Natural killer cell (primary cell): ENCODE measurements at regions of chr1 and their contacts with region 1.

Region 1: DNA sequence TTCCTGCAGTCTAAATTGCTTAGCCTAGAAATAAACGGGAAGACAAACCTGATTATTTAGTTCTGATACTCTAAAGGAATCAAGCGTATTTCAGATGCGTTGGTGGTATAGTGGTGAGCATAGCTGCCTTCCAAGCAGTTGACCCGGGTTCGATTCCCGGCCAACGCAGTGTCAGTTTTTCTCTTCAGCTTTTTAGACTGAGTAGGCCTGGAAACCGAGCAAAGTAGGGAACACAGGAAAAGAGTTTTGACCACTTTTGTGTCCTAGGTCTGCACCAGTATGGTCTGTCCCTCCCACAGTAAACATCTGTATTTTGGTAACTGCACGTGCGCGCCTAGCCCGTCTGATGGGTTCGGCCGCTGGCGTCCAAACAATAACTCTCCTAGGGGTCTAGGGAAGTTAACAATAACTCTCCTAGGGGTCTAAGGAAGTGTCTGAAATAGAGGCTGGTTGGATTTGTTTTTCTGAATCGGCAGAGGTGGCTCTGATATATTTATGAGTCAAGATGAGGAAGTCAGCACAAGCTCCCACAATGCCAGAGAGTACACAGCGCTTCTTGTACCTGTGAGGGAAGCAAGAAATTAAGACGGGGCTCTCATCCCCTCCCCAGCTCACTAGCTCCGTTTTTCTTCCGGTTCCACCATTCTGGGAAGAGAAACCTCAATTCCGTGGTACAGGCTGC is 15.6 kb upstream of the HJV start:
- DNase-seq: peak; percentile 69 to 87
- ATAC-seq: peak; percentile 29 to 60 (median 42)
- H3K4me3 ChIP-seq: peak overlapping the region; percentile 63
- H3K4me3 Mint-ChIP-seq: peak overlapping the region; percentile 97
- H3K27ac ChIP-seq: peak overlapping the region; percentile 56
- H3K27ac Mint-ChIP-seq: peak overlapping the region; percentile 99
- H3K4me1 ChIP-seq: peaks cover 37% of the 10 kb centered on the region
- H3K4me1 Mint-ChIP-seq: peaks cover 44 to 49% of the 10 kb centered on the region in 2 donors
- H3K27me3 ChIP-seq: no peaks in the 10 kb centered on the region
- H3K27me3 Mint-ChIP-seq: peaks cover 6 to 16% of the 10 kb centered on the region in 2 donors
- CTCF ChIP-seq: no peak

Region 2: GRCh38 chr1:145823565-145824498 is 213.3 kb before region 1 on chr1 and contains the starts of genes POLR3C and RNF115:
- intact Hi-C with region 1: no loop called
- DNase-seq: peak; percentile 74 to 93
- ATAC-seq: peak; percentile 82 to 90 (median 89)
- H3K4me3 ChIP-seq: peak within 1 kb of the TSS; percentile 90
- H3K4me3 Mint-ChIP-seq: peak within 1 kb of the TSS; percentile 97
- H3K27ac ChIP-seq: peak within 1 kb of the TSS; percentile 77
- H3K27ac Mint-ChIP-seq: peak within 1 kb of the TSS; percentile 95
- H3K4me1 ChIP-seq: peaks cover 9% of the 10 kb centered on the region
- H3K4me1 Mint-ChIP-seq: peaks cover 22 to 33% of the 10 kb centered on the region in 2 donors
- H3K27me3 ChIP-seq: no peaks in the 10 kb centered on the region
- H3K27me3 Mint-ChIP-seq: no peaks in the 10 kb centered on the region
- CTCF ChIP-seq: no peak
- total RNA-seq, gene POLR3C: 26.4 to 37.2 (median 27.5) TPM
- total RNA-seq, gene RNF115: 26.7 to 31.8 (median 30.8) TPM

Region 3: DNA sequence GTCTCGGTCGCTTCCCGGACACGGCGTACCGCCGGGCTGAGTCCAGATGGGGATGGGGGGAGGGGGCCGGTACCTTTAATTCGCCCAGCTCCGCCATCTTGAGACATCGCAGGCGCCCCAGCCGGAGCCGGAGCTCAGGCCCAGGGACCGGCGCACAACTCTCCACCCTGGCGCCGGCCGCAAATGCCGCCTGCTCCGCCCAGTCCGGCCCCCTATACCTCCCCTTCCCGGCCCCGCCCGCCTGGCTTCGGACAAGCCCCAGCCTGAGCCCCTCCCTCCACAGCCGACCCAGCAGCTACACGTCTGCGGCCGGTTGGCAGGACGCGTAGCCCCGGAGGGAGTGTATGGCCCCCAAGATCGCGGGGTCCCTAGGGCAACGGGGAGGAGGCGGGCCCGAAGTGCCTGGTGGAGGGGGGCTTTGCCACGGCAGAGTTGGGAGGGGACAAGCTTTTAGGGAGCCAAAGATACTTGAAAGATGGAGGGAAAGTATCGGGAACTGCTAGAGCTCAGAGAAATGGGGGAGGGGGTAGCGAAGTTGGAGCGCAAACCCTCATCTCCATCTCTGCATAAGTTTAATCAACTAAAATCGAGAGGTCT is 178.1 kb before region 1 on chr1 and contains the start of gene PIAS3:
- intact Hi-C with region 1: loop called (anchors 5 kb)
- DNase-seq: peak; percentile 80 to 88
- ATAC-seq: peak; percentile 85 to 93 (median 89)
- H3K4me3 ChIP-seq: peak within 1 kb of the TSS; percentile 94
- H3K4me3 Mint-ChIP-seq: peak within 1 kb of the TSS; percentile 94
- H3K27ac ChIP-seq: peak within 1 kb of the TSS; percentile 74
- H3K27ac Mint-ChIP-seq: peak within 1 kb of the TSS; percentile 79 to 96
- H3K4me1 ChIP-seq: peaks cover 18% of the 10 kb centered on the region
- H3K4me1 Mint-ChIP-seq: peaks cover 11 to 36% of the 10 kb centered on the region in 2 donors
- H3K27me3 ChIP-seq: no peaks in the 10 kb centered on the region
- H3K27me3 Mint-ChIP-seq: no peaks in the 10 kb centered on the region
- CTCF ChIP-seq: no peak
- total RNA-seq, gene PIAS3: 40.1 to 53.3 (median 51.0) TPM

Region 4: DNA sequence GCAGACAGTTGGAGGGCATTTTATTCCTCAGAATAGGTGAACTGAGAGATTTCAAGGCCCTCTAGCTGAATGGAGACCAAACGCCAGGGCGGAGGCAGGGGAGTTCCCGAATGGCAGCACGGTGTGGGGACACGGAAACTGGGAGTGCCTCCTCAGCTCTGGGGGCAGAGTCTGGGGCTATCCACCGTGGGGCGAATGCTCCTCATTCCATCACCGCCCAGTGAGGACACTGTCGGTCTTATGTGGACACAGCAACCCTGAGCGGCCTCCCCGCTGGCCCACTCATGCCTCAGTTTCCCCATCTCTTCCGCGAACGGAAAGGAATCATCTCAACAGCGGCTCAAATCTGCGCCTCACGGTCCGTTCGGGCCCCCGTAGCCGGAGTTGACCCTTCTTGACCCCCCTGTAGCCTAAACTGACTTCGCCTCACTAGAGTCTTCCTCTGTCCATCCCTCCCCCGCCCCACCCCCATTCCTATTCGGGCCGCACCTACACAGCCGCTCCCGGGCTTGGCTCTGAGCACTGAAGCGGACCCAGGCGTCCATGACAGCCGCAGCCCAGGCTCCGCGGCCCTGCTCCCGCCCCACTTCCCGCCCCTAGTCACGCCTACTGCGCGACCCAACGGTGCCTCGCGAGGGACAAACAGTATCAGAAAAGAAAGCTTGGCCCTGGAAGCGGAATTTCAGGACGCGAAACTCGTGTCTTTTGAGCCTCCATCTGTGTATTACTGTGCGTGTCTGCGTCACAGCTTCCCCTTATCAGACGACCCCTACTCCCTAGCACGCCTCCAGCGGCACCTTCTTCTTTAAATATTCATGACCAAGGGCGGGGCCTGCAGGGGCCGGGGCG is 118.7 kb before region 1 on chr1 and contains the start of gene PEX11B:
- intact Hi-C with region 1: loop called (anchors 2 kb)
- DNase-seq: peak; percentile 90 to 96
- ATAC-seq: peak; percentile 89 to 96 (median 89)
- H3K4me3 ChIP-seq: peak within 1 kb of the TSS; percentile 65
- H3K4me3 Mint-ChIP-seq: peak within 1 kb of the TSS; percentile 95
- H3K27ac ChIP-seq: peak within 1 kb of the TSS; percentile 82
- H3K27ac Mint-ChIP-seq: peak within 1 kb of the TSS; percentile 91 to 92
- H3K4me1 ChIP-seq: peaks cover 22% of the 10 kb centered on the region
- H3K4me1 Mint-ChIP-seq: peaks cover 33 to 43% of the 10 kb centered on the region in 2 donors
- H3K27me3 ChIP-seq: no peaks in the 10 kb centered on the region
- H3K27me3 Mint-ChIP-seq: no peaks in the 10 kb centered on the region
- CTCF ChIP-seq: no peak
- total RNA-seq, gene PEX11B: 20.6 to 26.0 (median 24.9) TPM

Region 5: GRCh38 chr1:145996433-145997015 is 40.6 kb before region 1 on chr1 and contains the start of gene TXNIP:
- intact Hi-C with region 1: loop called (anchors 5 kb)
- DNase-seq: peak; percentile 91 to 95
- ATAC-seq: peak; percentile 85 to 97 (median 95)
- H3K4me3 ChIP-seq: peak within 1 kb of the TSS; percentile 64
- H3K4me3 Mint-ChIP-seq: peak within 1 kb of the TSS; percentile 97
- H3K27ac ChIP-seq: peak within 1 kb of the TSS; percentile 88
- H3K27ac Mint-ChIP-seq: peak within 1 kb of the TSS; percentile 97 to 99
- H3K4me1 ChIP-seq: peaks cover 48% of the 10 kb centered on the region
- H3K4me1 Mint-ChIP-seq: peaks cover 71 to 76% of the 10 kb centered on the region in 2 donors
- H3K27me3 ChIP-seq: no peaks in the 10 kb centered on the region
- H3K27me3 Mint-ChIP-seq: no peaks in the 10 kb centered on the region
- CTCF ChIP-seq: no peak
- total RNA-seq, gene TXNIP: 984 to 1,724 (median 1,422) TPM

Region 6: DNA sequence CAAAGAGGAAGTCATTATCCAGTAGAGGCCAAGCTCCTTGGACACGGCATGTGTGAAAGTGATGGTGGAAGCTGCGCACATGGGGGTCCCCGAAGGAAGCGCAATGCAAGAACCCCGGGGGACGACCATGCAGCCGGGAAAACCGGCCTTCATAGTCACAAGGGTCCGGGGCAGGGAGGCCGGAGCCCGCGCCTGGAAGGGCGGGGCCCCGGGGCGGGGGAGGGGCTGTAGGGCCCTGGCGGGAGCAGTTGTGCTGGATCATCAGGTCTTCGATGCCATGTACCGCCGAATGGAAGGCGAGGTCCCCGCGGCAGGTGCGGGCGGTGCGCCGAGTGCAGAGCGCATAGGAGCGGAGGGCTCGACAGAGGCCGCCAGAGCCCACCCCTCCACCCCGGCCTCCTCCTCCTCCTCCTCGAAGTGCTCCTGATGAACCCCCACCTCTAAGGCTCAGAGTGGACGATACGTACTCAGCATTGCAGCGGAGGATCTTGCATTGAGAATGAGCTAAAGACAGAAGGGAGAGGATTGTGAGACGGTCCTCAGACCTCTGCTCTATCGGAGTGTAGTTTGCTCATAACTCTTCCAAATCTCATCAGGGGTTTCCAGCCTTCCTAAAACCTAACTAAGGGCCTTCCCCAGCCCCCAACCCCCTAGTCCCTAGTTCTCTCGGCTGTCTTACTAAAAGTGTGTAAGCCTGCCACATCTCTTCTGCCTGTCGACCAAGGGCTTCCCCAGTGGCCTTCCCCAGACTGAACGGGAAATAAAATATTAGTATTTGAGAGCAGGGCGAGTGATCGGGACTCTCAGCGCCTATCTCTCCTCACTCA is 17.7 kb before region 1 on chr1:
- intact Hi-C with region 1: no loop called
- DNase-seq: no peak
- ATAC-seq: peak in 1 of 3 donors; percentile 17
- H3K4me3 ChIP-seq: no peak overlapping the region
- H3K4me3 Mint-ChIP-seq: no peak overlapping the region
- H3K27ac ChIP-seq: no peak overlapping the region
- H3K27ac Mint-ChIP-seq: no peak overlapping the region
- H3K4me1 ChIP-seq: peaks cover 4% of the 10 kb centered on the region
- H3K4me1 Mint-ChIP-seq: no peaks in the 10 kb centered on the region
- H3K27me3 ChIP-seq: peaks cover 21% of the 10 kb centered on the region
- H3K27me3 Mint-ChIP-seq: peaks cover 32 to 49% of the 10 kb centered on the region in 2 donors
- CTCF ChIP-seq: no peak

Region 7: GRCh38 chr1:146049436-146049835 is 12.3 kb after region 1 on chr1:
- intact Hi-C with region 1: loop called (anchors 2 kb)
- DNase-seq: no peak
- ATAC-seq: peak in 1 of 3 donors; percentile 21
- H3K4me3 ChIP-seq: no peak overlapping the region
- H3K4me3 Mint-ChIP-seq: no peak overlapping the region
- H3K27ac ChIP-seq: no peak overlapping the region
- H3K27ac Mint-ChIP-seq: peak overlapping the region in 1 of 2 donors; percentile 36
- H3K4me1 ChIP-seq: peaks cover 8% of the 10 kb centered on the region
- H3K4me1 Mint-ChIP-seq: peaks cover 0 to 27% of the 10 kb centered on the region in 2 donors
- H3K27me3 ChIP-seq: no peaks in the 10 kb centered on the region
- H3K27me3 Mint-ChIP-seq: no peaks in the 10 kb centered on the region
- CTCF ChIP-seq: no peak